HepG2 (cell line): ENCODE measurements at regions of chr18 and their contacts with region 1.

Region 1: DNA sequence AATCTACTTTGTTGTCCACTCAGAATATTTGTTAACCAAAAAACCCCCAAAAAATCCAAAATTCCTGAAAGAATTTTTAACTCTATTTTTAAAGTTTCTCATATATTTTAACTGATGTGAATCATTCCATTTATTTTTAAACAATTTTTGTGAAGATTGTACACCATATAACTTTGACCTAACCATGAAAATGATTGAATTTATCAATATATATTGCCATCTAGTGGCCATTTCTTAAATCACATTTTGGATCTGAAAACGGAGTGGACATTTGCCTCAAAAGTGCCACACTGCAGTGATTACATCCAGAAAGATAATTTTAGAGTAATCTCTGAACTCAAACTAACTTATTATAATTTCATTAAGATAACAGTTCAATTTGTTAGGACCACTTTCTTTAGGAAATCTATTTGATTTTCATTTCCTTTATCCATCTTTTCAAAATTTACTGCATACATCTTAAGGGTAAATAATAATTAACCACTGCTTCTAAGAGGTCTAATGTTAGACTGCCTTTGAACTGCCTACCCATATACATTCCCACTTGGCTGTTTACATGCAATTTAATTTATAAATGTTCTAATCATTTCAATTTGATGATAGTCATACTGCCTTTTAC is 71.1 kb downstream of the DSC3 start:
- DNase-seq: peak; percentile 21
- ATAC-seq: peak; percentile 53; the same call in 1 of the 3 replicates
- H3K4me3 ChIP-seq: no peak overlapping the region
- H3K27ac ChIP-seq: no peak overlapping the region
- H3K4me1 ChIP-seq: no peaks in the 10 kb centered on the region
- H3K27me3 ChIP-seq: no peaks in the 10 kb centered on the region; a peak in 1 of 5 replicates
- CTCF ChIP-seq: peak; percentile 51
- EP300 ChIP-seq: no peak
- POLR2A ChIP-seq: no peak
- RAD21 ChIP-seq: no peak

Region 2: DNA sequence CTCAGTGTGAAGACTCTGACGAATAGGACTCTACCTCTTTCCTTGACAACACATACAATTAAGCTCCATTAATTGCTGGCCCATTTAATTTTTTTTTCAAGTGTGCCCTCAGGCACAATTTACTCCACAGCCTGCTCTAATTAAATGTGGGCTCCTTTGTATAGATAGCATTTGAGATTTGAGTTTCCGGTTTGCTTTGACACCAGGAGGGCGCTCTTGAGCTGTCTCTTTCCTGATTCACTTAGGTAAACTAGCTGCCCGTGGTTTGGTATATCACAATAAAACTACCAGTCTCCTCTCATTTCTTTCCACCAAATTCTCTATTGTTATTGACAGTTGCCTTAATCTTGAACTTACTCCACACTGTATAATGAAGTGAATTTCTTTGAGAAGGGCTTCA is 594.9 kb before region 1 on chr18:
- CTCF ChIA-PET with region 1: no interaction called
- POLR2A ChIA-PET with region 1: no interaction called
- in situ Hi-C with region 1: no loop called
- intact Hi-C with region 1: loop called (anchors 10 kb)
- DNase-seq: peak; percentile 7
- ATAC-seq: peak; percentile 35; the same call in 1 of the 3 replicates
- H3K4me3 ChIP-seq: no peak overlapping the region
- H3K27ac ChIP-seq: no peak overlapping the region
- H3K4me1 ChIP-seq: no peaks in the 10 kb centered on the region
- H3K27me3 ChIP-seq: no peaks in the 10 kb centered on the region
- CTCF ChIP-seq: peak; percentile 31
- EP300 ChIP-seq: no peak
- POLR2A ChIP-seq: no peak
- RAD21 ChIP-seq: no peak

Region 3: DNA sequence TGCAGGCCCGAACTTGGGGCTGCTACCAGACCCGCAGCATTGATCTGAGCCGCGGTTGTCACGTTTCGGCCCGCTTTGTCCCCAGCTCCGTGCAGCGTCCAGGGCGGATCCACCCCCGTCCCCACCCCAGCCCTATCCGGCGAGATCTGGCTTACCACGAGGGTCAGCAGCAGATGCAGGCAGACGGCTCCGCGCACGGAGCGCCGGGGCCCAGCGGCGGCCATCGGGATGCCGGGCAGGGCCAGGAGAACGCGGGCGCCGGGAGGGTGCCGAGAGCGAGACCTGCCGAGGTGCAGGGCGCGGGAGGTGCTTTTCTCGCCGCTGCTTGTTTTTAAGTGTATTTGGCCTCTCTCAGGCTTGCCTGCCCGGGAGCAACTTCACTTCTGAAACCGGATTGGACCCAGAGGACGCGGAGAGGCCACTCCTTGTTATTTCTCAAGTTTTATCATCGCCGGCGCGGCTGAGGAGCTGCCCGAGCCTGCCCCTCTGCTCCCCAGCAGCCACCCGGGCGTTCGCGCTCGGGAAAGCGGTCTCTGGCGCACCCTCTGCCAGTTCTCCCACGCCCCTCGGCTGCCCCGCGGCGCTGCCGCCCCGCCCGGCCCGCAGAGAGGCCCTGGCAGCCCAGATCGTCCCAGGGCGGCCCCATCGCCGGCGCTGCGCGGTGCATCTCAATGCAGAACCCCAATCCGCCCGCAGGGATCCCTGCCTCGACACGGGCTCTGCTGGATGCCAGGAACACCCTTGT is 71.2 kb after region 1 on chr18 and contains the start of gene DSC3:
- CTCF ChIA-PET with region 1: no interaction called
- POLR2A ChIA-PET with region 1: no interaction called
- in situ Hi-C with region 1: no loop called
- intact Hi-C with region 1: no loop called
- DNase-seq: no peak
- ATAC-seq: peak; percentile 92
- H3K4me3 ChIP-seq: peak within 1 kb of the TSS; percentile 43 to 73 (median 56)
- H3K27ac ChIP-seq: no peak within 1 kb of the TSS
- H3K4me1 ChIP-seq: peaks cover 16% of the 10 kb centered on the region
- H3K27me3 ChIP-seq: peaks cover 0 to 15% of the 10 kb centered on the region in 2 experiments; a peak in 4 of 5 replicates
- CTCF ChIP-seq: no peak
- EP300 ChIP-seq: no peak
- POLR2A ChIP-seq: no peak
- RAD21 ChIP-seq: no peak
- total RNA-seq, gene DSC3: 0.21 and 0.38 TPM in 2 replicates

Region 4: DNA sequence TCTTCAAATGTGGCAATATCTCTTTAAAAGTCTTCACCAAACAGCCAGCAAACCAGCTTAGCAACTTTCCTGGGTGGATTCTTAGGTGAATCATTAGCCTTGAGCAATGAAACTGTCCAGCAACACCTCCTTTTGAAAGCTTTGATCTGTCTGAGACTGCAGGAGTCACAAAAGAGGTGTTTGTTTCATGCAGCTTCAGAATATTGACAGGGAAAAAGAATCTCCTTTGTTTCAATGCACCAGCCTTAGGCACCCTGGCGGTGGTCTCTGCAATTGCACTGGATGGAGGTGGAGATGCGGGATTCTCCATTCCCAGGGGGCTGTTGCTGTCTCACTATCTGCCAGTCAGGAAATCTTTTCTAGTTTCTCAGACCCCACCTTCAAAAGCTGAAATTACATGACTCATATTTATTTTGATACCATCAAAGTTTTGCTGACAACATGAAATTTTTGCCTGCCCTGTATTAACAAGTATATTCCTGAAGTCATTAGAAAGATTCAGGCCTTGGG is 270.5 kb after region 1 on chr18:
- CTCF ChIA-PET with region 1: no interaction called
- POLR2A ChIA-PET with region 1: no interaction called
- in situ Hi-C with region 1: no loop called
- intact Hi-C with region 1: loop called (anchors 5 kb)
- DNase-seq: peak; percentile 98
- ATAC-seq: peak; percentile 86
- H3K4me3 ChIP-seq: no peak overlapping the region
- H3K27ac ChIP-seq: peak overlapping the region; percentile 94
- H3K4me1 ChIP-seq: peaks cover 61% of the 10 kb centered on the region
- H3K27me3 ChIP-seq: no peaks in the 10 kb centered on the region
- CTCF ChIP-seq: peak; percentile 82
- EP300 ChIP-seq: peak; percentile 29 to 94; a peak in 2 of 4 replicates
- POLR2A ChIP-seq: no peak
- RAD21 ChIP-seq: peak; percentile 80

Region 5: GRCh38 chr18:31563778-31564177 is 592.3 kb after region 1 on chr18:
- CTCF ChIA-PET with region 1: no interaction called
- POLR2A ChIA-PET with region 1: no interaction called
- in situ Hi-C with region 1: no loop called
- intact Hi-C with region 1: loop called (anchors 5 kb)
- DNase-seq: no peak
- ATAC-seq: no peak
- H3K4me3 ChIP-seq: no peak overlapping the region
- H3K27ac ChIP-seq: no peak overlapping the region
- H3K4me1 ChIP-seq: peaks cover 55% of the 10 kb centered on the region
- H3K27me3 ChIP-seq: no peaks in the 10 kb centered on the region
- CTCF ChIP-seq: no peak
- EP300 ChIP-seq: no peak
- POLR2A ChIP-seq: no peak
- RAD21 ChIP-seq: no peak

Region 6: GRCh38 chr18:31722369-31722957 is 751.0 kb after region 1 on chr18:
- CTCF ChIA-PET with region 1: interaction called, 4 read pairs
- POLR2A ChIA-PET with region 1: no interaction called
- in situ Hi-C with region 1: no loop called
- intact Hi-C with region 1: loop called (anchors 10 kb)
- DNase-seq: peak; percentile 69
- ATAC-seq: peak; percentile 96
- H3K4me3 ChIP-seq: no peak overlapping the region
- H3K27ac ChIP-seq: no peak overlapping the region
- H3K4me1 ChIP-seq: no peaks in the 10 kb centered on the region
- H3K27me3 ChIP-seq: peaks cover 0 to 18% of the 10 kb centered on the region in 2 experiments; a peak in 3 of 5 replicates
- CTCF ChIP-seq: peak; percentile 84
- EP300 ChIP-seq: no peak
- POLR2A ChIP-seq: no peak
- RAD21 ChIP-seq: no peak